ENCODE measurements at regions of chr15 and their contacts with region 1.

Region 1: GRCh38 chr15:70097337-70098169 is at the start of gene TLE3:
- DNase-seq: peak; percentile 92 to 97
- H3K4me3 ChIP-seq: peak within 1 kb of the TSS; percentile 87 to 99 (median 96)
- H3K27ac ChIP-seq: peak within 1 kb of the TSS; percentile 65
- H3K4me1 ChIP-seq: peaks cover 6 to 25% (median 20%) of the 10 kb centered on the region in 4 experiments
- H3K27me3 ChIP-seq: peaks cover 0 to 11% (median 10%) of the 10 kb centered on the region in 4 experiments; a peak in 6 of 7 replicates
- CTCF ChIP-seq: peak; percentile 0 to 12 (median 4); a peak in 2 of 4 replicates
- EP300 ChIP-seq: no peak; a peak in 1 of 3 replicates
- POLR2A ChIP-seq: peak; percentile 82 to 91
- RAD21 ChIP-seq: peak; percentile 32 to 47; a peak in 3 of 4 replicates
- total RNA-seq, gene TLE3: 61.2 and 67.5 TPM in 2 replicates

Region 2: GRCh38 chr15:70071799-70072198 is 25.8 kb before region 1 on chr15:
- CTCF ChIA-PET with region 1: interaction called, 3 read pairs
- POLR2A ChIA-PET with region 1: interaction called, 14 read pairs
- DNase-seq: no peak
- H3K4me3 ChIP-seq: no peak overlapping the region
- H3K27ac ChIP-seq: no peak overlapping the region
- H3K4me1 ChIP-seq: peaks cover 0 to 2% (median under 1%) of the 10 kb centered on the region in 4 experiments; a peak in 1 of 7 replicates
- H3K27me3 ChIP-seq: no peaks in the 10 kb centered on the region
- CTCF ChIP-seq: no peak
- EP300 ChIP-seq: no peak
- POLR2A ChIP-seq: no peak
- RAD21 ChIP-seq: no peak

Region 3: GRCh38 chr15:70083946-70084345 is 13.6 kb before region 1 on chr15:
- CTCF ChIA-PET with region 1: interaction called, 7 read pairs
- POLR2A ChIA-PET with region 1: interaction called, 136 read pairs
- DNase-seq: no peak
- H3K4me3 ChIP-seq: peak overlapping the region in 3 of 4 experiments; percentile 17 to 40 (median 19); a peak in 3 of 8 replicates
- H3K27ac ChIP-seq: 0 out of 2 replicates have a peak overlapping the region, but pooled peaks have one; percentile 34
- H3K4me1 ChIP-seq: peaks cover 17 to 58% (median 50%) of the 10 kb centered on the region in 4 experiments
- H3K27me3 ChIP-seq: no peaks in the 10 kb centered on the region
- CTCF ChIP-seq: no peak
- EP300 ChIP-seq: no peak
- POLR2A ChIP-seq: no peak
- RAD21 ChIP-seq: no peak

Region 4: DNA sequence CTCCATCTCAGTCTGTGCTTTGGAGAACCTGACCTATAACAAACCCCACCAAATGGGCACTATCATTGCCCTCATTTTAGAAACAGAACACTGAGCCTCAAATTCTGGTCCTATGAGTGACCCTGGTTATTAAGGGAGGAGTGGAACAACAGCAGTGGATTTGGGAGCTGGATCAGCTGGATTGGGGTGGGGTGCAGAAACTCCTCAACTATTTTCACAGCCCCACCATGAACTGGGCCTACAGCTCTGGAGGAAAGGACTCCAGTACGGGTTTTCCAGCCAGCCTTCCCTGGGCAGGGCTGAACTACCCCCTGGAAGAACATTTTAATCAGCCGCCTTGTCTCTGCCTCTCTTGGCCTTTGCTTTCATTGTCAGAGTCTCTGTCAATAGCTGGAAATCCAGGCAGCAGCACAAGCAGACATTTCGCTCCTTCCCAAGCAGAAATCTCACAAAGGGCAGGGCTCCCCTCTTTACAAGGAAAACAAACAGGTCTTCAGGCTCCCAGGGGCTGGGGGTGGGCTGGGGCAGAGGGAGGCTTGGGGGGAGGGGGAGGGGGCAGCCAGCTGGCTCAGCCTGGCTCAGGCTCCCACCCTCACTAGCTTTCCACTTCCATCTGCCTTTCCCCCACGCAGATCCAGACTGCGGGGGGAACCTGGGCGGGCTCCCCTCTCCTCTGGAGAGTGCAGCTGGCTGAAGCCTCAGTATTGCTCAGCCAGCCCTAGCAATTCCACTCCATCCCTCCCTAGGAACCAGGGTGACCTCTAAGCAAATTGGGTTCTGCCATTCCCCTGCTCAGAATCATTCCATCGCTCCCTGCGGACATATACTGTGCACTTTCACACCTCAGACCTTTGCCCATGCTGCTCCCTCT is 13.9 kb after region 1 on chr15:
- CTCF ChIA-PET with region 1: interaction called, 16 read pairs
- POLR2A ChIA-PET with region 1: interaction called, 151 read pairs
- DNase-seq: peak; percentile 60 to 86
- H3K4me3 ChIP-seq: peak overlapping the region; percentile 16 to 49 (median 19); a peak in 5 of 8 replicates
- H3K27ac ChIP-seq: no peak overlapping the region
- H3K4me1 ChIP-seq: peaks cover 7 to 13% (median 10%) of the 10 kb centered on the region in 4 experiments; a peak in 6 of 7 replicates
- H3K27me3 ChIP-seq: no peaks in the 10 kb centered on the region; a peak in 1 of 7 replicates
- CTCF ChIP-seq: no peak
- EP300 ChIP-seq: peak in 1 of 2 experiments; percentile 51; a peak in 1 of 3 replicates
- POLR2A ChIP-seq: no peak
- RAD21 ChIP-seq: peak in 1 of 2 experiments; percentile 29; a peak in 2 of 4 replicates

Region 5: DNA sequence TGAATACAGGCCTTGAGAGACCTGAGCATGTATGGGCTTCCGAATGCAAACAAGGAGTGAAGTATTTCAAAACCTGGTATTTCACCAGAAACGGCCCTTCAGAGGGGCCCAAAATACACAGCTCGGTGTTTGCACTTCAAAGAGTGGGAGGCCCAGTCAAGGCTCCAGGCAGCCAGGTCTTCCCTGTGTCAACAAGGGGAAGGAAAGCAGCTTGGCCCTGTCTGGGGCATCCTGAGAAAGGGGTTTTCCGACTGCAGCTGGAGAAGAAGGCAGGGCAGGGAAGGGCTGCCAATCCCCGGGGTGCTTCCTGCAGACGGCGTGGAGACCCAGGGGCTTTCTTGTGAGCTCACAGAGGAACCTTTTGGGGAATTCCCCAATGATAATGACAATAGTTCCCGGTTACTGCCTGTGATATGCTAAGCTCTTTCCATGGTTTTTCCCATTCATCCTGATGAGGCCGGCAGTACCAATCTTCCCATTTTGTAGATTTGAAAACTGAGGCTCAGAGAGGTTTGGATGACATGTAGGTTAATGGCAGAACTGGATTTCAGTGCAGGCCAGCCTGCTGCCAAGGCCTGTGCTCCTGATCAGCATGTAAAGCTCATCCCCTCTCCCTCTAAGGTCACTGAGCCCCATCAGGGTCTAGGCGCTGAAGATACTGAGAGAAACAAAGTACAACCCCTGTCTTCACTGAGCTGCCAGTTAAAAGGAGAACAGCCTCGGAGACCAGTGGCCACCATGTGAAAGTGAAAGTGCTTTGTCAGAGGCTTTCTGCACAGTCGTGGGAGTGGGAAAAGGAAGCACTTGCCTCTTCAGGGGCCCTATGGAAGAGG is 43.2 kb after region 1 on chr15:
- CTCF ChIA-PET with region 1: interaction called, 4 read pairs
- POLR2A ChIA-PET with region 1: interaction called, 70 read pairs
- DNase-seq: peak; percentile 64 to 67
- H3K4me3 ChIP-seq: peak overlapping the region in 2 of 4 experiments; percentile 9 to 17; a peak in 3 of 8 replicates
- H3K27ac ChIP-seq: peak overlapping the region; percentile 55; the same call in 1 of the 2 replicates
- H3K4me1 ChIP-seq: peaks cover 13 to 27% (median 16%) of the 10 kb centered on the region in 4 experiments
- H3K27me3 ChIP-seq: peaks cover 0 to 11% (median 5%) of the 10 kb centered on the region in 4 experiments; a peak in 4 of 7 replicates
- CTCF ChIP-seq: no peak
- EP300 ChIP-seq: peak in 1 of 2 experiments; percentile 90; a peak in 1 of 3 replicates
- POLR2A ChIP-seq: no peak
- RAD21 ChIP-seq: peak; percentile 2 to 29; a peak in 3 of 4 replicates

Region 6: DNA sequence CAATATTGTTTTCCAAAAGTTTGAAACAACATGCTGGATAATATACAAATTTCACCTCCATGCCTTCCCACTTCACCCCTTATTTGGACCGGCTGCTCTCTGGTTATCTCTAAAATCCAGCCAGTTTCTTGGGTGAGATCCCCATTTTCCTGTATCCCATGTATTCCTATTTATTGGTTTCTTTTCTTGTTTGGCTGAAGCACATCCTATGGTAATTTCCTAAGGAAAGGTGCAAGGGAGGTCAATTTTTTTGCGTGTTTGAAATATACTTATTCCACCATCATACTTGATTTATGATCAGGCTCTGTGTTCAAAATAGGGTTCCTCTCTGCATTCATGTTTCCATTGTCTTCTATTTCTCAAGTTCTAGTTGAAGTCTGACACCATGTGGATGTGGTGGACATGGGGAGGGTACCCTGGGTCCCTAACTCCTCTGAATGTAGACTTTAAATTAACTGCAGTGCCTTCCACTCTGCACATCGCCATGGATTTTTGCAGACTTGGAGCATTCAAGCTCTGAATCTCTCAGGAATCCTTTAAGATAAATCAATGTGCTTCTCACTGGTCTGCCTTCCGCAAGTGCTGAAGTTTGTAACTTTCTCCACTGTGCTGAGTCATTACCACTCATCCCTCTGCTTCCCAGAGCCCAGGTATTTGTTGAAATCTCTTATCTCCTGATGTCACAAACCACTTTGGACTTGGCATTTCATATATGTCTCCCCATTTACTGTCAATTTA is 52.3 kb after region 1 on chr15:
- CTCF ChIA-PET with region 1: interaction called, 3 read pairs
- POLR2A ChIA-PET with region 1: interaction called, 18 read pairs
- DNase-seq: no peak
- H3K4me3 ChIP-seq: no peak overlapping the region
- H3K27ac ChIP-seq: no peak overlapping the region
- H3K4me1 ChIP-seq: peaks cover 0 to 14% (median 7%) of the 10 kb centered on the region in 4 experiments; a peak in 4 of 7 replicates
- H3K27me3 ChIP-seq: peaks cover 0 to 2% (median 0%) of the 10 kb centered on the region in 4 experiments; a peak in 1 of 7 replicates
- CTCF ChIP-seq: no peak
- EP300 ChIP-seq: no peak
- POLR2A ChIP-seq: no peak
- RAD21 ChIP-seq: no peak

Region 7: DNA sequence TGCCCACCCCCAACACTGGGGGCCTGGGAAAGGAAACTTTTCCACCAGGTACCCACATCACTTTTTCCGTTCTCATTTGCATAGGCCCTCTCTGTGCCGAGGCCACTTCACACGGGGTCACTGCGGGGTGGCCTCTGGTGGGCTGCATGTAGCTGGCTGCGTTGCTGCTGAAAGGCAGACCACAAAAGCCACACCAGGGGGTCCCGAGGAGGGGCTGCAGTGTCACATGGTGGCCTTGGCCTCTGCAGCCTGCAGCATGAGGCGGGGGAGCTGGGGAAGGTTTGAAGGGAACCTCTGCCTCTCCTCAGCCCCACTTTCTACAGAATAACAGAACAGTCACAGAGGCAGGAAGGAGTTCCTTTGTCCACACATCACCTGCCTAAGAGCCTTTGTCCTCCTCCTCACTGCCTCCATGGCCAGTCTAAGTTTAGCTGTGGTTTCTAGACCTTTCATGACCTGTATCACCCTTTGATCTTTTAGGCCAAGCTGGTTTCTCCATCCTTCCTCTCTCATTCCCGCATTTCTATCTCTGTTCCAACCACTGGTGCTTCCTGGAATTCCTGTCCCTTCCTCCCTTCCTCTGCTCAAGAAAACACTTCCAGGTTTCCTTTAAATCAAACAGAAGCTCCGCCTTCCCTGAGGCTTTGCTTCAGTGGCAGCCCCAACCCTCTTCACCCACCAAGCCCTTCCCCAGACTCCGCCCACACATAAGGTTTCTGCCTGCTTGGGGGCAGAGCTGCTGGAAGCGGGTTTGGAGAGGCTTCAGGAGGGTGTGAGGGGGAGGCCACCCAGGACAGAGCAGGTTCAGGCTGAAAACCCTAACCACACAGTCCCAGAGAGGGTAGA is 150.8 kb after region 1 on chr15:
- CTCF ChIA-PET with region 1: interaction called, 3 read pairs
- POLR2A ChIA-PET with region 1: interaction called, 11 read pairs
- DNase-seq: no peak
- H3K4me3 ChIP-seq: no peak overlapping the region
- H3K27ac ChIP-seq: no peak overlapping the region
- H3K4me1 ChIP-seq: peaks cover 8 to 12% (median 9%) of the 10 kb centered on the region in 4 experiments
- H3K27me3 ChIP-seq: peaks cover 0 to 2% (median 0%) of the 10 kb centered on the region in 4 experiments; a peak in 3 of 7 replicates
- CTCF ChIP-seq: no peak
- EP300 ChIP-seq: no peak
- POLR2A ChIP-seq: no peak
- RAD21 ChIP-seq: no peak

Measured in H1 (cell line).